Activated CD4-positive, alpha-beta T cell treated with anti-CD3 and anti-CD28 coated beads for 36 hours (primary cell): ENCODE measurements at regions of chr16 and their contacts with region 1.

Region 1: GRCh38 chr16:29961479-29962343 is at the start of gene TMEM219:
- DNase-seq: peak; percentile 94
- ATAC-seq: peak; percentile 95
- H3K4me3 Mint-ChIP-seq: peak within 1 kb of the TSS; percentile 88
- H3K27ac Mint-ChIP-seq: peak within 1 kb of the TSS; percentile 87
- H3K4me1 Mint-ChIP-seq: peaks cover 17% of the 10 kb centered on the region
- H3K27me3 Mint-ChIP-seq: no peaks in the 10 kb centered on the region
- total RNA-seq, gene TMEM219: 34.6 to 42.5 TPM

Region 2: GRCh38 chr16:29877266-29877961 is 84.3 kb before region 1 on chr16:
- CTCF ChIA-PET with region 1: no interaction called
- POLR2A ChIA-PET with region 1: no interaction called
- intact Hi-C with region 1: loop called in 1 of 2 experiments (anchors 5 kb)
- DNase-seq: peak; percentile 85
- ATAC-seq: peak; percentile 93
- H3K4me3 Mint-ChIP-seq: peak overlapping the region; percentile 29
- H3K27ac Mint-ChIP-seq: no peak overlapping the region
- H3K4me1 Mint-ChIP-seq: peaks cover 7% of the 10 kb centered on the region
- H3K27me3 Mint-ChIP-seq: peaks cover 22% of the 10 kb centered on the region

Region 3: DNA sequence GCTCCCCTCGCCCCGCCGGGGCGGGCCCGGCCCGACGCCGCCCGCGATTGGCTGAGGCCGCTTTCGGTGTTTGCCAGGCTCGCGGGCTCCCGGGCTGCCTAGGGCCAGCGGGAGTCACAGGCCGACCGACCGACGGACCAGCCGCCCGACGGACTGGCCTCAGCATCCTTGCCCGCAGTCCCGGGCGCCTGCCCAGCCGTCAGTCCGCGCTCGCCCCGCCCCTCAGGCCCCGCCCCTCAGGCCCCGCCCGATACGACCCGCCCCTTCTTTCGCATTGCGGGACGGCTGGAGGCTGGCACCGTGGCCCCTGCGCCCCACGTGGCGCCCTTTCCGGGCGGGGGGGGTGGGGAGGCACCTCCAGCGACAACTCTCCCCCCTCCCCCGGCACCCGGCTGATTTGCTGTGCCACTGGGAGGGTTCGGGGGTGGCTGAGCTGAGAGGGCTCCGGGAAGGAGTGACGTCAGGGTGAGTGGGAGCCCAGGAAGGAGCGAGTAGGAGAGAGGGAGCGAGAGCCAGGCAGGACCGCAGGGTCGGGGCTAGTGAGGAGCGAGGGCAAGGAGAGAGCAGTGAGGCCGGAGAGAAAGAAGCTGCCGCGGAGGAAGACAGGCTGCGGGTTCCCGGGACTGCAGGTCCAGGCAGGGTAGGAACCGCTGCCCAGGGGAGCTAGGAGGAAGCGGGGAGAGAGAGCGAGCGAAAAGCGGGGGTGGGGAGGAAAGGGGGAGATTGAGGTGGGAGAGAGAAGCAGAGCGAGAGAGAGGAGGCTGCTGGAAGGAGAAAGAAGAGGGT is 61.4 kb before region 1 on chr16 and contains the start of gene ASPHD1:
- CTCF ChIA-PET with region 1: no interaction called
- POLR2A ChIA-PET with region 1: no interaction called
- intact Hi-C with region 1: loop called in 1 of 2 experiments (anchors 1 kb)
- DNase-seq: peak; percentile 84
- ATAC-seq: peak; percentile 92
- H3K4me3 Mint-ChIP-seq: peak within 1 kb of the TSS; percentile 74
- H3K27ac Mint-ChIP-seq: peak within 1 kb of the TSS; percentile 38
- H3K4me1 Mint-ChIP-seq: peaks cover 13% of the 10 kb centered on the region
- H3K27me3 Mint-ChIP-seq: peaks cover 21% of the 10 kb centered on the region
- total RNA-seq, gene ASPHD1: 2.7 to 3.2 TPM

Region 4: GRCh38 chr16:29920288-29921033 is 41.2 kb before region 1 on chr16:
- CTCF ChIA-PET with region 1: no interaction called
- POLR2A ChIA-PET with region 1: interaction called, 14 read pairs
- intact Hi-C with region 1: no loop called
- DNase-seq: no peak
- ATAC-seq: no peak
- H3K4me3 Mint-ChIP-seq: no peak overlapping the region
- H3K27ac Mint-ChIP-seq: peak overlapping the region; percentile 2
- H3K4me1 Mint-ChIP-seq: peaks cover 23% of the 10 kb centered on the region
- H3K27me3 Mint-ChIP-seq: no peaks in the 10 kb centered on the region

Region 5: GRCh38 chr16:29926005-29926710 is 35.6 kb before region 1 on chr16 and contains the start of gene KCTD13:
- CTCF ChIA-PET with region 1: interaction called, 7 read pairs
- POLR2A ChIA-PET with region 1: interaction called, 14 read pairs
- intact Hi-C with region 1: loop called (anchors 1 to 2 kb)
- DNase-seq: peak; percentile 92
- ATAC-seq: peak; percentile 90
- H3K4me3 Mint-ChIP-seq: peak within 1 kb of the TSS; percentile 82
- H3K27ac Mint-ChIP-seq: peak within 1 kb of the TSS; percentile 95
- H3K4me1 Mint-ChIP-seq: peaks cover 32% of the 10 kb centered on the region
- H3K27me3 Mint-ChIP-seq: no peaks in the 10 kb centered on the region
- total RNA-seq, gene KCTD13: 30.4 to 33.4 TPM

Region 6: GRCh38 chr16:30122604-30123160 is 161.0 kb after region 1 on chr16:
- CTCF ChIA-PET with region 1: no interaction called
- POLR2A ChIA-PET with region 1: no interaction called
- intact Hi-C with region 1: loop called in 1 of 2 experiments (anchors 1 kb)
- DNase-seq: peak; percentile 35
- ATAC-seq: peak; percentile 37
- H3K4me3 Mint-ChIP-seq: peak overlapping the region; percentile 87
- H3K27ac Mint-ChIP-seq: peak overlapping the region; percentile 89
- H3K4me1 Mint-ChIP-seq: peaks cover 17% of the 10 kb centered on the region
- H3K27me3 Mint-ChIP-seq: no peaks in the 10 kb centered on the region

Region 7: DNA sequence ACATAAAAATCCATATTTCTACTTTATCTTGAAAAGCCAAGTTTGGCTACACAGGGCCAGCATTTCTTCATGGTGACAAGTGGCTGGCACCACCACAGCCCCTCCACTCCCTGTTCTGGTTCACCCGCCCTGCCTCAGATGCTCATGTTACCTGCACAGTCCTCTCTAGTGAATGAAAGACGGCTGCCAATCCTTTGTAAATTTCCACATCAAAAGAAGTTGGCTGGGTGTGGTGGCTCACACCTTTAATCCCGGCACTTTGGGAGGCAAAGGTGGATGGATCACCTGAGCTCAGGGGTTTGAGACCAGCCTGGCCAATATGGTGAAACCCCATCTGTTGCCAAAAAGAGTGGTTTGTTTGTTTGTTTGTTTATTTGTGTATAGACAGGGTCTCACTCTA is 201.8 kb after region 1 on chr16:
- CTCF ChIA-PET with region 1: no interaction called
- POLR2A ChIA-PET with region 1: no interaction called
- intact Hi-C with region 1: no loop called
- DNase-seq: no peak
- ATAC-seq: no peak
- H3K4me3 Mint-ChIP-seq: no peak overlapping the region
- H3K27ac Mint-ChIP-seq: no peak overlapping the region
- H3K4me1 Mint-ChIP-seq: peaks cover 19% of the 10 kb centered on the region
- H3K27me3 Mint-ChIP-seq: no peaks in the 10 kb centered on the region